Colonic mucosa (tissue), 4 donors: ENCODE measurements at regions of chr6 and their contacts with region 1.

Region 1: DNA sequence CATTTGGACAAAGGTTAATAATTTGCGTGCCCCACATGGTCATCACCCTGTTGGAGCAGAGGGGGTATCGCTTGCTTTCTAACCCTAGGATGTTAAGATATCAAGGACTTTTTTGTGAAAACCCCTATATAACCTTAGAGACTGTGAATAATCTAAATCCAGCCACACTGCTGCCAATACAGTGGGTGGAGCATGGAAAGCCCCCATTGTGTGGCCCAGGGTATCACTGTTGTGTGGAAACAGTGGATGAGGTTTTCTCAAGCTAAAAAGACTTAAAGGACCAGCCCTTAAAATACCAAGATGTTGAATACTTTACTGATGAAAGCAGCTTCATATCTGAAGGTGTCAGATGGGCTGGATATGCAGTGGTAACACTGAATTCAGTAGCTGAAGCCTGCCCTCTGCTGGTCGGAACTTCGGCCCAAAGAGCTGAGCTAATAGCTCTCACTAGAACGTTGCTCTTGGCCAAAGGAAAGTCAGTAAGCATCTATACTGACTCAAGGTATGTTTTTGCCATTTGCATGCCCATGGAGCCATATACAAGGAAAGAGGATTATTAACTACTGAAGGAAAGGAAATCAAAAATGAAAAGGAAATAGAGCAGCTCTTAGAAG is 695.2 kb downstream of the PHF3 start:
- DNase-seq: peak; percentile 87
- H3K4me3 ChIP-seq: no peak overlapping the region
- H3K27ac ChIP-seq: no peak overlapping the region
- H3K4me1 ChIP-seq: no peaks in the 10 kb centered on the region
- H3K27me3 ChIP-seq: no peaks in the 10 kb centered on the region
- CTCF ChIP-seq: peak; percentile 53

Region 2: DNA sequence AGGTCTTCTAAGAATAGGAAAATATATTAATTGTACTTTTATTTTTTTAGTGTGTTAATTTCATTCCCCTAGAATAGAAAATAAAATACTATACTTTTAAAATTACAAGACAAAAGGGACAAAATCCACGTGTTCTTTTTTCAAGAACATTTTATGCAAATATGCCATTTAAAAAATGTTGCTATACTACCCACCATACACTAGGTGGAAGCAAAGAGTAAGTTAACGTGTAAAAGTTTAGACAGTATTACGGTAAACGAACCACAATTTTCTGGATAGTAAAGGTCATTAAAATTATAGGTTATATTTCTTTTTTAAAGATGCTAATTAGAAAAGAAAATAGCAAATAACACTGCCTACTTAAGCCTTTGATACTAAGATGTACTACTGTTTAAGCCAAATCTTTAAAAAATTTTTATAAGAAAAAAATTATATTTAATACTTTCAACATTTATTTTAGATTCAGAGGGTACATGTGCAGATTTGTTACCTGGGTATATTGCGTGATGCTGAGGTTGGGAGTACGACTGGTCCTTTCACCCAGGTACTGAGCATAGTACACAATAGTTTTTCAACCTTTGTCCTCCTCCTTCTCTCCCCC is 407.6 kb before region 1 on chr6:
- intact Hi-C with region 1: loop called (anchors 2 kb)
- DNase-seq: no peak
- H3K4me3 ChIP-seq: no peak overlapping the region
- H3K27ac ChIP-seq: no peak overlapping the region
- H3K4me1 ChIP-seq: no peaks in the 10 kb centered on the region
- H3K27me3 ChIP-seq: no peaks in the 10 kb centered on the region
- CTCF ChIP-seq: peak; percentile 65

Region 3: DNA sequence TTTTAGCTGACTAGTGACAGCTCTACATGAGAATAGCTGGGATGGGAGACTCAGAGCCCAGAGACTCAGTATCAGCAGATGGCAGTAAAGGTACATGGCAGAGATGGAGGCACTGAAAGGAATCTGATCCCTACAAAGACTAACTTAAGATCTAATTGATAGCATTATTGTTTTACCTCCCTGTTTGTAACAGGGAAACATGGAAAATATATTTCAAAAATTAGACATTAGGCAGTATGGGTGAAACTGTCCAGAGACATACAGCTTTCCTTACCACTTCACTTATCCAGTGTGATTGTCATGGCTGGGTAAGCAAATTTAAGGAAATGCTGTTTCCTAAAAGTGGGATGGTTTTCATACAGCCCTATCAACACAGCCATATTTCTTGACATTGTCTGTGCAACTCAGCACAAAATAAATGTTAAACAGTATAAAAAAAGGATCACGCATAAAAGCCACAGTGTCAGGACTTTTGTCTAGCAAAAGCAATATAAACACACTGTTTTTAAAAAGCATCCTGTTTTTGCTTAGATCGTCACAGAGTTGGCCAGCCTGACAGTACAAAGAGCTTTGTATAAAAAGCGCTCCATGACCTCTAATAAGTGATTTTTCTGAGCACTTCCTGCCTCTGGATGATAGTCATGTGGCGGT is 318.3 kb before region 1 on chr6:
- intact Hi-C with region 1: loop called (anchors 5 kb)
- DNase-seq: peak; percentile 51
- H3K4me3 ChIP-seq: no peak overlapping the region
- H3K27ac ChIP-seq: no peak overlapping the region
- H3K4me1 ChIP-seq: no peaks in the 10 kb centered on the region
- H3K27me3 ChIP-seq: no peaks in the 10 kb centered on the region
- CTCF ChIP-seq: peak; percentile 68

Region 4: DNA sequence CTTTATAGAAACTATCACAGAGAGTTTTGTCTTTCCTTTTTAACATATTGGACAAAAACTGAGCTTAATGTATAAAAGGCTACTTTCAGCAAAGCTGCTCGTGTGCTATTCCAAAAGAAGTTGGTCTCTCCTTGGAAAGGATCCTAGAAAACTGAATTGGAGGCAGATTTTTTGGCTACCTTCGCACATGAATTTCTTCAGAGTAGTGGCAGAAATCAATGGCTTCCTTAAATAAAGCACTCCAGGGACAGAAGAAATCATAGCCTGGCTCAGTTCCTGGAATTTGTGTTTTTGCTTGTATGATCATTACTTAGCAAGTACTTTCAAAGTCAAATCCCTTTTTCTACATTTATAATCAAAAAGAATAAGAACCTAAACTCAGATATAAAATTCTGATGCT is 85.1 kb after region 1 on chr6:
- intact Hi-C with region 1: no loop called
- DNase-seq: no peak
- H3K4me3 ChIP-seq: no peak overlapping the region
- H3K27ac ChIP-seq: no peak overlapping the region
- H3K4me1 ChIP-seq: no peaks in the 10 kb centered on the region
- H3K27me3 ChIP-seq: no peaks in the 10 kb centered on the region
- CTCF ChIP-seq: no peak